ENCODE measurements at regions of chr3 and their contacts with region 1.

Region 1: GRCh38 chr3:14426063-14426620 is 23.7 kb downstream of the SLC6A6 start:
- DNase-seq: peak; percentile 68
- H3K4me3 Mint-ChIP-seq: peak overlapping the region; percentile 49
- H3K27ac Mint-ChIP-seq: peak overlapping the region; percentile 82
- H3K4me1 Mint-ChIP-seq: peaks cover 89% of the 10 kb centered on the region
- H3K27me3 Mint-ChIP-seq: no peaks in the 10 kb centered on the region

Region 2: DNA sequence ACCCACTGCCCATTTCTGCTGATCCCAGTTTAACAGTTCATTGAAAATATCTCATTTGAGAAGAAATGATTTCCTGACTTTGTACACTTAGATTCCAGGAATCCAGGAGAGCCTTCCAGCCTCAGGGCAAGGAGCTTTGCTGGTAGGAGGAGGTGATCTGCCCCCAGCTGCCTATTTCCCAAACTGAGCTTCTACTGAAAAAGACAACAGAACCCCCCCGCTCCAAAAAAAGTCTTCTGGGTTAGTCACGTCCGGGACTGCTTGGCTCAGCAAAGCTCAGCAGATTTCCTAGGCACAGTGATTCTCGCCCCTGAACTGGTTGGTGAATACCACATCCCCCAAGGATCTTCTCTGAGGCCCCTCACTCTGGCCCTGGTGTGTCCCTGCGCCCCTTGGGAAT is 10.6 kb before region 1 on chr3:
- CTCF ChIA-PET with region 1: interaction called, 10 read pairs
- POLR2A ChIA-PET with region 1: no interaction called
- DNase-seq: no peak
- H3K4me3 Mint-ChIP-seq: no peak overlapping the region
- H3K27ac Mint-ChIP-seq: peak overlapping the region; percentile 25
- H3K4me1 Mint-ChIP-seq: peaks cover 11% of the 10 kb centered on the region
- H3K27me3 Mint-ChIP-seq: no peaks in the 10 kb centered on the region

Region 3: GRCh38 chr3:14440531-14441239 is 14.5 kb after region 1 on chr3:
- CTCF ChIA-PET with region 1: no interaction called
- POLR2A ChIA-PET with region 1: no interaction called
- DNase-seq: no peak
- H3K4me3 Mint-ChIP-seq: no peak overlapping the region
- H3K27ac Mint-ChIP-seq: no peak overlapping the region
- H3K4me1 Mint-ChIP-seq: peaks cover 8% of the 10 kb centered on the region
- H3K27me3 Mint-ChIP-seq: no peaks in the 10 kb centered on the region